ENCODE measurements at regions of chr6 and their contacts with region 1.

Region 1: GRCh38 chr6:147285087-147285855 is 81.1 kb downstream of the STXBP5 start:
- DNase-seq: no peak
- H3K4me3 Mint-ChIP-seq: no peak overlapping the region
- H3K27ac Mint-ChIP-seq: peak overlapping the region; percentile 11
- H3K4me1 Mint-ChIP-seq: peaks cover 43% of the 10 kb centered on the region
- H3K27me3 Mint-ChIP-seq: no peaks in the 10 kb centered on the region

Region 2: DNA sequence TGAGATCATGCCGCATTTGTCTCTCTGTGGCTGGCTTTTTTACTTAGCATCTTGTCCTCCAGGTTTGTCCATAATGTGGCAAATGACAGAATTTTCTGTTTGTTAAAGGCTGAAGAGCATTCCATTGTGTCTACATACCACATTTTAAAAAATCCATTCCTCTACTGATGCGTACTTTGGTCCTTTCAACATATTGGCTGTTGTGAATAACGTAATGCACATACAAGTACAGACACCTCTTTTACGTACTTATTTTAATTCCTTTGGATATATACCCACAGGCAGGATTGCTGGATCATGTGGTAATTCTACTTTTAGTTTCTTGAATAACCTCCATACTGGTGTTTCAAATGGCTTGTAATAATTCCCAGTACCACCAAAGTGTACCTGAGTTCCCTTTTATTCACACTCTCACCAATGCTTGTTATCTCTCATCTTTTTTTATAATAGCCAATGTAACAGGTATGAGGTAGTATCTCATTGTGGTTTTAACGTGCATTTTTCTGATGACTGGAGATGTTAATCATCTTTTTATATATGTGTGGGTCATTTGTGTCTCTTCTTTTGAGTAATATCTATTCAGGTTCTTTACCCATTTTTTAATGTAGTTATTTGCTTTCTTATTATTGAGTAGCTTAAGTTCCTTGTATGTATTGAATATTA is 494.7 kb before region 1 on chr6:
- intact Hi-C with region 1: loop called (anchors 2 kb)
- DNase-seq: no peak
- H3K4me3 Mint-ChIP-seq: no peak overlapping the region
- H3K27ac Mint-ChIP-seq: no peak overlapping the region
- H3K4me1 Mint-ChIP-seq: peaks cover 5% of the 10 kb centered on the region
- H3K27me3 Mint-ChIP-seq: peaks cover 5% of the 10 kb centered on the region

Region 3: DNA sequence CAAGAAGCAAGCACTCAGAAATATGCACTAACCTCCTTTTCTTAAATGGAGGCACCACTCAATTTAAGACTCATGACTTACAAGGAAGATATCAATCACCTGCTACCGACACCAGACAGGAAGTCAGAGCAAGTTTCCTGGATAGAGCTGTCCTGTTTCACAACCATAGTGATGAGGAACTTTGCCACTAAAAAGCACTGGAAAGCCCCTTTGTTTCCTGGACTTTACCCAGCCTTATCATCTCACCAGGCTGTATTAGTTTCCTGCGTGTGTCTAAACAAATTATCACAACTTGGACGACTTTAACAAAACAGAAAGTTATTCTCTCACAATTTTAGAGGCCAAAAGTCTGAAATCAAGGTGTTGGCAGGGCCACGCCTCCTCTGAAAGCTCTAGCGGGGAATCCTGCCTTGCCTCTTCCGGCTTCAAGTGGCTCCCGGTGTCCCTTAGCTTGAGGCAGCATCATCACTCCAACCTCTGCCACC is 334.9 kb before region 1 on chr6:
- intact Hi-C with region 1: loop called (anchors 5 kb)
- DNase-seq: peak; percentile 6
- H3K4me3 Mint-ChIP-seq: no peak overlapping the region
- H3K27ac Mint-ChIP-seq: peak overlapping the region; percentile 44
- H3K4me1 Mint-ChIP-seq: peaks cover 20% of the 10 kb centered on the region
- H3K27me3 Mint-ChIP-seq: no peaks in the 10 kb centered on the region

Region 4: DNA sequence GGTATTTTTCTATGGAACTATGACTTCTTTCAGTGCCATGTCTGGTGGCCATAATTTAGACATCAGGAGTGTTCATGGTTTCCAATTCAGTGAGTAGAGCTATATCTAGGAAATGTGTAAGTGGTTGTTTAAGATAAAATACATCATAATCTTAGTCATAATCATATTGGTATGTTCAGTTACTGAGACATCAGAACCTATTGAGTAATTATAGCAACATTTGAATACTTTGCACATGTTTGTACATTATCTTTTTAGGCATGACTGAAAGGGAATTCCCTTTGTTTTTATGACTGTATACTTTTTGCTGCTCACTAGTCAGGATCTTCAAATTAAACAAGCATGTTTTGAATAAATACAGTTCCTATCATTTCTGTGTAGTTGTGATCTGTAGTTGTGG is 17.0 kb before region 1 on chr6:
- intact Hi-C with region 1: loop called (anchors 1 kb)
- DNase-seq: no peak
- H3K4me3 Mint-ChIP-seq: no peak overlapping the region
- H3K27ac Mint-ChIP-seq: peak overlapping the region; percentile 28
- H3K4me1 Mint-ChIP-seq: peaks cover 16% of the 10 kb centered on the region
- H3K27me3 Mint-ChIP-seq: no peaks in the 10 kb centered on the region

Region 5: GRCh38 chr6:147382945-147383554 is 97.8 kb after region 1 on chr6:
- intact Hi-C with region 1: loop called (anchors 1 kb)
- DNase-seq: no peak
- H3K4me3 Mint-ChIP-seq: no peak overlapping the region
- H3K27ac Mint-ChIP-seq: no peak overlapping the region
- H3K4me1 Mint-ChIP-seq: peaks cover 7% of the 10 kb centered on the region
- H3K27me3 Mint-ChIP-seq: no peaks in the 10 kb centered on the region

Measured in activated T-helper 1 cell treated with anti-CD3 and anti-CD28 coated beads, Interleukin-12 subunit alpha, Interleukin-12 subunit beta, Interleukin-2, Interleukin-4 antibody, amounts not matched to agents 30 ng/mL and 10 ng/mL and 1 ng/mL, durations not matched to agents 14 hours and 24 hours and 36 hours (primary cell).